CD14-positive monocyte (primary cell): ENCODE measurements at regions of chr10 and their contacts with region 1.

Region 1: GRCh38 chr10:127906548-127907377 is at the start of gene PTPRE:
- DNase-seq: peak; percentile 65 to 78 (median 78)
- H3K4me3 ChIP-seq: peak within 1 kb of the TSS; percentile 63 to 88 (median 79)
- H3K4me3 Mint-ChIP-seq: peak within 1 kb of the TSS; percentile 81 to 90
- H3K27ac ChIP-seq: peak within 1 kb of the TSS in 1 of 2 donors; percentile 69
- H3K27ac Mint-ChIP-seq: peak within 1 kb of the TSS in 6 of 7 donors; percentile 5 to 77 (median 50)
- H3K4me1 ChIP-seq: peaks cover 35 to 41% of the 10 kb centered on the region in 2 donors
- H3K4me1 Mint-ChIP-seq: peaks cover 51% of the 10 kb centered on the region
- H3K27me3 ChIP-seq: no peaks in the 10 kb centered on the region
- H3K27me3 Mint-ChIP-seq: peaks cover 0 to 5% (median 4%) of the 10 kb centered on the region in 3 donors
- CTCF ChIP-seq: peak; percentile 92
- polyA plus RNA-seq, gene PTPRE: 95.2 to 271 (median 125) TPM

Region 2: DNA sequence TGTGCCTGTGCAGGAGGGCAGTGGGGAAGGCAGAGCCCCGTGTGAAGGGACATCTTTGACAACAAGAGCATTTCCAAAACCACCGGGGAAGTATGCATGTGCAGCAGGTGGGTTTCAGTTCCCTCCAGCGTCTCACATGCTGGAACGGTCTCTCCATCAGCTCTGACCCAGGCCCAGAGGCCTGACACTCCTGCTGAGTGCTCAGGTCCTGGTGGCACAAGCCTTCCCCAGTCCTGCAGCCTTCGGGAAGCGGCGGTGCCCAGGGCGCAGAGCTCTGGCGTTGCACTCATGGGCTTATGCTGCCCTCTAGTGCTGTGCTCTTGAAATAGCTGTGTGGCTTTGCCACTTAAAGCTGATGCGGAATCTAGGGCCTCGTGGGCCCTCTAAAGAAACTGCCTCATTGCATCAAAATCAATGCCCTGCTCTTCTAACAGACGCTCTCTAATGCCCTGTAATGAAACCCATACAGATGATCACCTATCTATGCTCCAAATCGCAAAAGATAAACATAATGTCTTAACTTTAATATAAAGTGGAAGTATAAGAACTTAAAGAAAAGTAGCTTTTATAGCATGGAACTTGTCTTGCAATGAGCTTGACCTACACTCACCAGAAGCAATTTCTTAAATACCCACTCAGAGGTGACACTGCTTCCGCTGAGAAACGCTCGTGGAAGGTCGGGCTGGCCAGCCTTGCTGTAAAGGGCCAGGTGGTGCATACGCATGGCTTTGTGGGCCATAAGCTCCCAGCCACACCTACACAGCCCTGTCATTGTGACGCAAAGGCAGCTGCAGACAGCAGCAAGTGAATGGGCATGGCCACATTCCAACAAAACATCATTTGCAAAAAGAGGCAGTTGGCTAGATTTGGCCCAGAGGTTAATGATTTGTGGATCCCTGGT is 52.6 kb before region 1 on chr10:
- intact Hi-C with region 1: no loop called
- DNase-seq: peak; percentile 48 to 77 (median 65)
- H3K4me3 ChIP-seq: no peak overlapping the region
- H3K4me3 Mint-ChIP-seq: peak overlapping the region in 1 of 2 donors; percentile 84
- H3K27ac ChIP-seq: no peak overlapping the region
- H3K27ac Mint-ChIP-seq: no peak overlapping the region
- H3K4me1 ChIP-seq: peaks cover 16 to 21% of the 10 kb centered on the region in 2 donors
- H3K4me1 Mint-ChIP-seq: peaks cover 20% of the 10 kb centered on the region
- H3K27me3 ChIP-seq: peaks cover 0 to 5% of the 10 kb centered on the region in 2 donors
- H3K27me3 Mint-ChIP-seq: peaks cover 5 to 11% (median 10%) of the 10 kb centered on the region in 3 donors
- CTCF ChIP-seq: peak; percentile 89

Region 3: DNA sequence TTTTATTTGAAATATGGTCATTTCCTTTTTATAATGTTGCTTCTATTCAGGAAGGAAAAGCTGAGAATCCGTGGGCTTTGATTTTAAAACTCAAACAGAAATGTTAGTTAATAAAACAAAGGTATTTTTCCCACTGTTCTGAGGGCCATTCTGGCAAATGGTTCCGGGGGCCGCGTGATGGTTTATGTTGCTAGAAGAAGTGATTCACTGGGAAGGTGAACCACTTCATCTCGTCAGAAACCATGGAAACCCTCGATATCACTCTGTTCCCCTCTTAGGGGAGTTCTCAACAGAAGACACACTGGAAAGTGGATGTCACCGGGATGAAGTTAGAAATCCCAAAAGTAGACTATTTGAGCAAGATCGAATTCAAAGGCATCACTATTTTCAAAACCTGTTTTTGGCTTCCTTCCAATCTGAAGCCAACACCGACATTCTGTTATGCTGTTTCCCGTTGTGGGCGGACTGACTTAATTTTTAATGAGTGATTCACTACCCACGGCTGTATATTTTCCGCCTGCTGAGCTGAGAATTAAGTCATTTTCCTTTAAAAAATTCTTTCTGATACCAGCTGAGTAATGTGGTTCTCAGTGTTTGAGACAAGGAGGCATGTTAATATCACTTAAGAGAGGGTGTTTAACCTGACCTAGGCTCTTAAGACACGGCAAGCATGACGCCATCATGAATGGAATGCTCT is 84.2 kb after region 1 on chr10:
- intact Hi-C with region 1: loop called in 1 of 2 experiments (anchors 5 kb)
- DNase-seq: peak; percentile 55 to 75 (median 70)
- H3K4me3 ChIP-seq: peak overlapping the region in 1 of 3 experiments; percentile 17
- H3K4me3 Mint-ChIP-seq: peak overlapping the region; percentile 3 to 43
- H3K27ac ChIP-seq: peak overlapping the region in 1 of 2 donors; percentile 28
- H3K27ac Mint-ChIP-seq: peak overlapping the region in 5 of 7 donors; percentile 25 to 85 (median 60)
- H3K4me1 ChIP-seq: peaks cover 35 to 42% of the 10 kb centered on the region in 2 donors
- H3K4me1 Mint-ChIP-seq: peaks cover 56% of the 10 kb centered on the region
- H3K27me3 ChIP-seq: no peaks in the 10 kb centered on the region
- H3K27me3 Mint-ChIP-seq: peaks cover 0 to 3% (median 0%) of the 10 kb centered on the region in 3 donors
- CTCF ChIP-seq: no peak

Region 4: DNA sequence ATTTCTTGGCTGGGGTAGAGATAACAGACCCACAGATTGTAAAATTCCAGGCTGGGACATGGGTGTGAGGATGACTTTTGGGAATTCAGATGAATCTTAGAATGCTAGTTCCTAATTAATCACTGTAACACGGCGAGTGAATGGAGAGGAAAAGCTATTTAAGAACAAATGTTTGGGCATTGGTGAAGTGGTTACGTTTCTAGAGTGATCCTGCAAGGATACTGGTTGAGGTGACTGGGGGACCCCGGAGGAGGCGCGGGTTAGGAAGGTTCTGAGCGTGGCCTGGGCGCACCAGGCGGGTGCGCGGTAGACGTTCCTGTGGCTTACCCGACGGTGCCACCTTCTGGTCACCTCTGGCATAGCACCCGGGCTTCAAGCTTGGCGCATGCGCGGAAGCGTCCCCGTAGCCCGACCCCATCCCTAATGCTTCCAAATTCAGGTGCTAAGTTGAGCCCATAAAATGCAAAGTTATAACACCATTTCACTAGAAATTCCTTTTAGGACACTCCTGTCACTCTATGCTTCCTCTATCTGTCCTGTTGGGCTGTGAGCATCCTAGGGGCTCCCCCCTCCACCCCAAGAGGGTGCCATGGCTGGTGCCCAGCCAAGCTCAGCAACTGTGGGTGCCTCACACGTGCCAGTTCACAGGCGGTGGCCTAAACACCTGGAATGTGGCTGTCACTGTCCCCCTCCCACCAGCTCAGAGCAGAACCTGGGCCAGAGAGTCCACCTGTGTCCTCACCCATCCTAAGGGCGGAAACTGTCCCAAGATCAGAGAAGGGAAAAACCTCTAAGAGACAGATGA is 104.6 kb after region 1 on chr10:
- intact Hi-C with region 1: loop called (anchors 1 to 2 kb)
- DNase-seq: peak; percentile 71 to 82 (median 78)
- H3K4me3 ChIP-seq: no peak overlapping the region
- H3K4me3 Mint-ChIP-seq: peak overlapping the region in 1 of 2 donors; percentile 81
- H3K27ac ChIP-seq: no peak overlapping the region
- H3K27ac Mint-ChIP-seq: peak overlapping the region in 1 of 7 donors; percentile 33
- H3K4me1 ChIP-seq: peaks cover 11 to 13% of the 10 kb centered on the region in 2 donors
- H3K4me1 Mint-ChIP-seq: peaks cover 21% of the 10 kb centered on the region
- H3K27me3 ChIP-seq: no peaks in the 10 kb centered on the region
- H3K27me3 Mint-ChIP-seq: peaks cover 0 to 2% (median 2%) of the 10 kb centered on the region in 3 donors
- CTCF ChIP-seq: peak; percentile 97

Region 5: DNA sequence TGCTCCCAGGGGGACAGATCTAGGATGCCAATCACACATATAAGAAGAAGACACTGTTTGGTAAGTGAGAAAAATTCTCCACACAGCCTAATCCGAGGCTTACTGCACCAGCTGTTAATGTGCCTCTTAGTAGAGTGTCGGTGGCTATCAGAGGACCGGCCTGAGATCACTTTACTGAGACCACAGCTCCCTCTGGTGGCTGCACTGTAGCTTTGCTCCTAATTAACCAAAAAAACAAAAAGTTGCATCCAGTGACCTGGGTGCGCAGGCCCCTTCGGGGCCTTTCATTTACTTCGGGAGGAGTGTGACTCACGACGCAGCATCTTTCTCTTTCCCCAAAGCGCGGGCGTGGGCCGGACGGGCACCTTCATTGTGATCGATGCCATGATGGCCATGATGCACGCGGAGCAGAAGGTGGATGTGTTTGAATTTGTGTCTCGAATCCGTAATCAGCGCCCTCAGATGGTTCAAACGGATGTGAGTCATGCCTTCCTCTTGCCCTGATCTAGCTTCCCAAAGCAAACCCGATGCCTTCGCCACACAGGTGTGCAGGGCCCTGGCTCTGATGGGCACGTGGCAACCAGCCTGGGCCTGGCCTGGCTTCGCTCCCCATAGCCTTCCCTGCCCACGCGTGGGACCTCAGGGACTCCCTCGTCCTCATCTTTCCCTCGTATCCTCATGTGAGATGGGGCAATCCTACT is 162.7 kb after region 1 on chr10:
- intact Hi-C with region 1: loop called in 1 of 2 experiments (anchors 5 kb)
- DNase-seq: peak; percentile 77 to 81 (median 80)
- H3K4me3 ChIP-seq: no peak overlapping the region
- H3K4me3 Mint-ChIP-seq: no peak overlapping the region
- H3K27ac ChIP-seq: peak overlapping the region in 1 of 2 donors; percentile 33
- H3K27ac Mint-ChIP-seq: peak overlapping the region; percentile 64 to 92 (median 83)
- H3K4me1 ChIP-seq: peaks cover 17 to 29% of the 10 kb centered on the region in 2 donors
- H3K4me1 Mint-ChIP-seq: peaks cover 31% of the 10 kb centered on the region
- H3K27me3 ChIP-seq: no peaks in the 10 kb centered on the region
- H3K27me3 Mint-ChIP-seq: peaks cover 0 to 5% (median 3%) of the 10 kb centered on the region in 3 donors
- CTCF ChIP-seq: peak; percentile 84

Region 6: DNA sequence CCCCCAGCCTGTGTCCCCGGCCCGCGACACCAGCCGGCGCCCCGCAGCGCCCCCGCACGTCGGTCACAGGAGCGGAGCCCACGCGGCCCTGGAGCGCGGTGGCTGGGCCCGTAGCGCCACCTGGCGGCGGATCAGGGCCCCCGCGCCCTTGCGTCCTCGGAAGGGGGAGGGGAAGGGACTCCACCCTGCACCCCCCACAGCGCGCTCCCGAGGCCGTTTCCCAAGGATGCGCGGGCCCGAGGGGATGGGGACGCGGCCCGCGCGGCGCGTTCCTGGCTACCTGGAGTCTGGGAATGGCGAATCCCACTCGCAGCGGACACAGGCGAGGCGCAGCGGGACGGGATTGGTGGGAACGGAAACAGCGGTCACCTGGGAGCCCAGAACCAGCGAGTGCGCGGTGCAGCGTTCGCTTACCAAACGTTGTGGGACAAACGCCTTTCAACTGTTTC is 243.3 kb after region 1 on chr10:
- intact Hi-C with region 1: loop called in 1 of 2 experiments (anchors 10 kb)
- DNase-seq: peak; percentile 71 to 80 (median 74)
- H3K4me3 ChIP-seq: peak overlapping the region; percentile 50 to 80 (median 51)
- H3K4me3 Mint-ChIP-seq: peak overlapping the region; percentile 66 to 71
- H3K27ac ChIP-seq: no peak overlapping the region
- H3K27ac Mint-ChIP-seq: no peak overlapping the region
- H3K4me1 ChIP-seq: peaks cover 5 to 13% of the 10 kb centered on the region in 2 donors
- H3K4me1 Mint-ChIP-seq: peaks cover 2% of the 10 kb centered on the region
- H3K27me3 ChIP-seq: peaks cover 0 to 6% of the 10 kb centered on the region in 2 donors
- H3K27me3 Mint-ChIP-seq: peaks cover 13 to 33% (median 30%) of the 10 kb centered on the region in 3 donors
- CTCF ChIP-seq: peak; percentile 89